Activated CD4-positive, alpha-beta memory T cell treated with anti-CD3 and anti-CD28 coated beads, Interleukin-2, amount 10 ng/mL, durations not matched to agents 7 days and 5 days (primary cell): ENCODE measurements at regions of chr12 and their contacts with region 1.

Region 1: GRCh38 chr12:49342066-49342913 is 4.4 kb upstream of the DNAJC22 start:
- DNase-seq: peak; percentile 80
- H3K4me3 Mint-ChIP-seq: peak overlapping the region; percentile 35
- H3K27ac Mint-ChIP-seq: no peak overlapping the region
- H3K4me1 Mint-ChIP-seq: peaks cover 40% of the 10 kb centered on the region
- H3K27me3 Mint-ChIP-seq: peaks cover 90% of the 10 kb centered on the region

Region 2: GRCh38 chr12:49296034-49296835 is 46.1 kb before region 1 on chr12:
- CTCF ChIA-PET with region 1: interaction called, 161 read pairs
- POLR2A ChIA-PET with region 1: interaction called, 17 read pairs
- DNase-seq: peak; percentile 68
- H3K4me3 Mint-ChIP-seq: peak overlapping the region; percentile 62
- H3K27ac Mint-ChIP-seq: no peak overlapping the region
- H3K4me1 Mint-ChIP-seq: peaks cover 34% of the 10 kb centered on the region
- H3K27me3 Mint-ChIP-seq: peaks cover 53% of the 10 kb centered on the region

Region 3: DNA sequence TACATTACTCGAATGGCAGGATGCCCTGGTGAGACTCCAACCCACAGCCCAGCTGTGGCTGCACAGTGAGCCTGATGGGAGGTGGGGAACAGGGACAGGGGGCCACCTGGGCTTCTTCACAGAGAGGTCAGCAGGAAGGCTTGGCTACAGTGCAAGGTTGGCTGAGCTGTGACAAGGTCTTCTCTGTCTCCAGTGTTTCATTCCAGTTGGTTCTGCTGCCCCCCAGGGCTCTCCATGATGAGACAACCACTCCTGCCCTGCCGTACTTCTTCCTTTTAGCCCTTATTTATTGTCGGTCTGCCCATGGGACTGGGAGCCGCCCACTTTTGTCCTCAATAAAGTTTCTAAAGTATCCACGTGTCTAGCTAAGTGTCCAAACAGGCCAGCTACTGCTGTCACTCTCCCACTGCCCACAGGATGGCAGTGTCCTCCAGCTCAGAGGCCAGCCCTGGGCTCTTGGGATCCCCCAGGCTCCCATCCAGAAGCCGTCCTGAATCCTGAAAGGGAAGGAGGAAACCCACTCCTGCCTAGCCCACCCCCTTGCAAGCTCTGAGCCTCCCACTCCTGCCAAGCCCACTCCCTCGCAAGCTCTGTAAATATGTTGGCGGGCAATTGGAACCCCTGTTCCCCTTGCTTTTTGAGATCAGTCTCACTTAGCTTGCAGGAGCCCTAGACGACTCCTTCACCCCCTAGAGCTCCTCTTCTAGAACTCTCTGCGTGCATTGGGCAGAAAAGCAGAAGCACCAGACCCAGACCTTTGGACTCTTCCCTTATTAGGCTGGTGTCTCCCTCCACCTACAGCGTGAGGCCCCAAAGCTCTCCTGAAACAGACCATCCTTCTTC is 10.7 kb before region 1 on chr12:
- CTCF ChIA-PET with region 1: interaction called, 26 read pairs
- POLR2A ChIA-PET with region 1: interaction called, 6 read pairs
- DNase-seq: no peak
- H3K4me3 Mint-ChIP-seq: no peak overlapping the region
- H3K27ac Mint-ChIP-seq: no peak overlapping the region
- H3K4me1 Mint-ChIP-seq: peaks cover 4% of the 10 kb centered on the region
- H3K27me3 Mint-ChIP-seq: peaks cover 34% of the 10 kb centered on the region